H1 (cell line): ENCODE measurements at regions of chr5 and their contacts with region 1.

Region 1: GRCh38 chr5:138464008-138464387 is 1.3 kb upstream of the EGR1 start:
- DNase-seq: peak in 1 of 2 experiments; percentile 98
- H3K4me3 ChIP-seq: peak overlapping the region; percentile 81 to 90 (median 88)
- H3K27ac ChIP-seq: peak overlapping the region; percentile 90; the same call in 1 of the 2 replicates
- H3K4me1 ChIP-seq: peaks cover 0 to 11% (median 7%) of the 10 kb centered on the region in 4 experiments; a peak in 6 of 7 replicates
- H3K27me3 ChIP-seq: peaks cover 0 to 15% (median 13%) of the 10 kb centered on the region in 4 experiments; a peak in 5 of 7 replicates
- CTCF ChIP-seq: peak in 2 of 3 experiments; percentile 71 to 73; a peak in 3 of 4 replicates
- EP300 ChIP-seq: peak; percentile 3 to 87; a peak in 2 of 3 replicates
- POLR2A ChIP-seq: no peak; a peak in 1 of 3 replicates
- RAD21 ChIP-seq: peak; percentile 28 to 59; a peak in 3 of 4 replicates

Region 2: GRCh38 chr5:138337685-138338410 is 126.2 kb before region 1 on chr5 and contains the start of gene FAM53C:
- CTCF ChIA-PET with region 1: no interaction called
- POLR2A ChIA-PET with region 1: interaction called, 12 read pairs
- DNase-seq: peak; percentile 71 to 98
- H3K4me3 ChIP-seq: peak within 1 kb of the TSS; percentile 68 to 95 (median 91)
- H3K27ac ChIP-seq: peak within 1 kb of the TSS; percentile 100
- H3K4me1 ChIP-seq: peaks cover 0 to 5% (median 2%) of the 10 kb centered on the region in 4 experiments; a peak in 3 of 7 replicates
- H3K27me3 ChIP-seq: no peaks in the 10 kb centered on the region
- CTCF ChIP-seq: no peak
- EP300 ChIP-seq: peak in 1 of 2 experiments; percentile 98; a peak in 2 of 3 replicates
- POLR2A ChIP-seq: peak; percentile 99 to 100
- RAD21 ChIP-seq: no peak
- total RNA-seq, gene FAM53C: 57.6 and 58.9 TPM in 2 replicates

Region 3: GRCh38 chr5:138438724-138439476 is 25.1 kb before region 1 on chr5 and contains the start of gene REEP2:
- CTCF ChIA-PET with region 1: interaction called, 215 read pairs
- POLR2A ChIA-PET with region 1: interaction called, 128 read pairs
- DNase-seq: peak; percentile 34 to 72
- H3K4me3 ChIP-seq: peak within 1 kb of the TSS; percentile 74 to 98 (median 84)
- H3K27ac ChIP-seq: no peak within 1 kb of the TSS
- H3K4me1 ChIP-seq: peaks cover 0 to 20% (median 14%) of the 10 kb centered on the region in 4 experiments; a peak in 6 of 7 replicates
- H3K27me3 ChIP-seq: no peaks in the 10 kb centered on the region
- CTCF ChIP-seq: no peak
- EP300 ChIP-seq: peak in 1 of 2 experiments; percentile 85; a peak in 1 of 3 replicates
- POLR2A ChIP-seq: no peak
- RAD21 ChIP-seq: no peak
- total RNA-seq, gene REEP2: 40.2 and 41.4 TPM in 2 replicates

Region 4: DNA sequence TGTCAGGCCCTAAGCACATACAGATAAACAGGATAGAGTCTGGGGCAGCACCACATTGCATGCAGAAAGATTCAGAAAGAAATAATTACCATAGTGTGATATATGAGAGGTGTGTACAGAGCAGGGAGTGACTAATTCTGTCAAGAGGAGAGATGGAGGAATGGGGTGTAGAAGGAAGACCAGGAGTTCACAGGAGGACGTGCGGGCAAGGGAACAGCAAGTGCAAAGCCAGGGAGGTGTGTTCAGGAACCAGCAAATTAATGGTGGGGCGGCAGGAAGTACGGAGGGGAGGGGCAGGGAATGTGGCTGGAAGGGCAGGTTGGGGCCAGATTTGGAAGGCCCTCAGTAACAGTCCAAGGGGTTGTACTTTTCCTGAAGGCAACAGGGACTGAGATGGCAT is 18.6 kb after region 1 on chr5:
- CTCF ChIA-PET with region 1: interaction called, 13 read pairs
- POLR2A ChIA-PET with region 1: interaction called, 105 read pairs
- DNase-seq: no peak
- H3K4me3 ChIP-seq: no peak overlapping the region
- H3K27ac ChIP-seq: no peak overlapping the region
- H3K4me1 ChIP-seq: no peaks in the 10 kb centered on the region
- H3K27me3 ChIP-seq: no peaks in the 10 kb centered on the region
- CTCF ChIP-seq: no peak
- EP300 ChIP-seq: no peak
- POLR2A ChIP-seq: no peak
- RAD21 ChIP-seq: no peak

Region 5: GRCh38 chr5:138508963-138509362 is 45.0 kb after region 1 on chr5:
- CTCF ChIA-PET with region 1: interaction called, 532 read pairs
- POLR2A ChIA-PET with region 1: interaction called, 294 read pairs
- DNase-seq: no peak
- H3K4me3 ChIP-seq: no peak overlapping the region
- H3K27ac ChIP-seq: no peak overlapping the region
- H3K4me1 ChIP-seq: no peaks in the 10 kb centered on the region
- H3K27me3 ChIP-seq: no peaks in the 10 kb centered on the region
- CTCF ChIP-seq: no peak
- EP300 ChIP-seq: no peak
- POLR2A ChIP-seq: no peak
- RAD21 ChIP-seq: no peak

Region 6: DNA sequence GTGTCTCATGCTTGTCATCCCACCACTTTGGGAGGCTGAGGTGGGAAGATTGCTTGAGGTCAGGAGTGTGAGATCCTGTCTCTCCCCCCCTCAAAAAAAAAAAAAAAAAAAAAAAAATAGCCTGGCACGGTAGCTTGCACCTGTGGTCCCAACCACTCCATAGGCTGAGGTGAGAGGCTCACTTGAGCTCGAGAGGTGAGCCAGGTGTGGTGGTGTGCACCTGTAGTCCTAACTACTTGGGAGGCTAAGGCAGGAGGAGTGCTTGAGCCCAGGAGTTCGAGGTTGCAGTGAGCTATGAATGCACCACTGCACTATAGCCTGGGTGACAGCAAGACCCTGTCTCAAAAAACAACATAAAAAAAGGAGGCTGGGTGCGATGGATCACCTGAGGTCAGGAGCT is 88.7 kb after region 1 on chr5:
- CTCF ChIA-PET with region 1: interaction called, 5 read pairs
- POLR2A ChIA-PET with region 1: interaction called, 14 read pairs
- DNase-seq: no peak
- H3K4me3 ChIP-seq: no peak overlapping the region
- H3K27ac ChIP-seq: no peak overlapping the region
- H3K4me1 ChIP-seq: no peaks in the 10 kb centered on the region
- H3K27me3 ChIP-seq: no peaks in the 10 kb centered on the region
- CTCF ChIP-seq: no peak
- EP300 ChIP-seq: no peak
- POLR2A ChIP-seq: no peak
- RAD21 ChIP-seq: no peak